Activated T-helper 1 cell treated with anti-CD3 and anti-CD28 coated beads, Interleukin-12 subunit alpha, Interleukin-12 subunit beta, Interleukin-2, Interleukin-4 antibody, amounts not matched to agents 30 ng/mL and 10 ng/mL and 1 ng/mL, durations not matched to agents 14 hours and 24 hours and 36 hours (primary cell): ENCODE measurements at regions of chr17 and their contacts with region 1.

Region 1: DNA sequence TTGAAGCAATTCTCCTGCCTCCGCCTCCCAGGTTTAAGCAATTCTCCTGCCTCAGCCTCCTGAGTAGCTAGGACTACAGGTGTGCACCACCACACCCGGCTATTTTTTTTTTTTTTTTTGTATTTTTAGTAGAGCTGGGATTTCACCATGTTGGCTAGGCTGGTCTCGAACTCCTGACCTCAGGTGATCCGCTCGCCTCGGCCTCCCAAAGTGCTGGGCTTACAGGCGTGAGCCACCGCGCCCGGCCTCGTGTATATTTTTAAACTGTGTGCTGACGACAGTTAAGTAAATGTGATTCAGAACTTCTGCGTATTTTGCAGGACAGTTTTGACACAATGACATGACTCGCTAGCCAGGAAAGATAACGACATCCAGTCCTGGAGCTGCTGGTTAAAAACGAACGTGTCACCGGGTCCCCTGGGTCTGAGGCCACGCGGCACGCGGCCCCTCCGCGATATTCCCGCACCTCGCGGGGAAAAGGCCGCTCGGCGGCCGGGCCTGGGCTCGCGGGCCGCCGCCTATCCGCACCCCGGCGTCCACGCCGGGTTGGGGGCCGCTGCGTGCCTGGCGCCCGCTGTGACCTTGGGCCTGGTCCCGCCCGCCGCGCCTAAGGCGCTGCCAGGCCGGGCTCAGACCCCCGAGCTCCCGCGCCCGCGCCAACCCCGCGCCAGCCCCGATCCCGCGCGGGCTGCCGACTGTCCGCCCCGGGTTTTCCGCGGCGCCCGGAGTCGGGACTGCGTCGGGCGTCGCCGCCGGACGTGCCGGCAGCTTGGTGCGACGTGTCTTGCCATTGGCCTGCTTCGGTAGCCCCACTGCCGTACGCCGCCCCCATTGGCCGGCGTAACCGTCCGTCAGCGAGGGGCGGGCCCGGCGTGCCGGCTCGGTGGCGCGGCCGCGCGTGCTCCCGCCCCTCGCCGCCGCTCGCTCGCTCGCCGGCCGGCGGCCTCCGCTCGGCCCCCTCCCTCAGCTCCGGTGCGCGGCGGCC is at the start of gene FOXK2:
- DNase-seq: peak; percentile 96
- H3K4me3 Mint-ChIP-seq: peak within 1 kb of the TSS; percentile 90
- H3K27ac Mint-ChIP-seq: peak within 1 kb of the TSS; percentile 92
- H3K4me1 Mint-ChIP-seq: peaks cover 14% of the 10 kb centered on the region
- H3K27me3 Mint-ChIP-seq: no peaks in the 10 kb centered on the region
- total RNA-seq, gene FOXK2: 97.7 and 98.1 TPM in 2 replicates

Region 2: DNA sequence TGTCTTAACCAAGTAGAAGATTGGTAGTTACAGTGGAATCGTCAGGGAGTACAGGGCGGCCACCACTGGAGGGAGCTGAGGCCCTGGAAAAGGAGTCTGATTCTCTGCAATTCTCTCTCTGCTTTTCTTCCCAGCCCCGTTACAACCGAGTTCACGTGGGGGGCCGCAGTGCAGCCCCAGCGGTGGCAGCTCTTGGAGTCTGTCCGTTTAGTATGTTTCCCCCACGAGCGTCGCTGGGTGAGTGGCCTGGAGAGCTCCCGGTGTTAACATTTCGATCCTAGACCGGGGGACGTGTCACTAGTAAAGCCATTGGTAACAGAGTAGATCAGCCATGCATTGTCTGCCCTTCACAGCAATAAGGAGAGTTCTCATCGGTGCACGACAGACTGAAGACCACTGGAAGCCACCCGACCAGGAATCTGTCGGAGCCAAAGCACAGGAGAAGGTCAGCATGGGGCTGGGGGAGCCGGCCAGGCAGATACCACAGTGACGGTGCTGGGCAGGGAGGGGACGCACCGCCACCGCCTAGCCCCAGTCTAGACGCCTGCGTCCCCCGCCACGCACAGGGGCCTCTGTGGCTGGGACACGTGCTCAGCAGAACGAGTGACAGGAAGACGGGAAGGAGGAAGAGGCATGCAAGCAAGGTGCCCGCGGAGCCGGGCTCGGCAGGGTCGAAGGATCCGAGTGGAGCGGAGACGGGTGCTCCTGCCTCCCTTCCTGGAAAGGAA is 274.5 kb before region 1 on chr17:
- intact Hi-C with region 1: no loop called
- DNase-seq: no peak
- H3K4me3 Mint-ChIP-seq: no peak overlapping the region
- H3K27ac Mint-ChIP-seq: peak overlapping the region; percentile 87
- H3K4me1 Mint-ChIP-seq: peaks cover 22% of the 10 kb centered on the region
- H3K27me3 Mint-ChIP-seq: no peaks in the 10 kb centered on the region

Region 3: GRCh38 chr17:82494236-82495055 is 24.7 kb before region 1 on chr17:
- intact Hi-C with region 1: loop called (anchors 1 kb)
- DNase-seq: peak; percentile 81
- H3K4me3 Mint-ChIP-seq: peak overlapping the region; percentile 12
- H3K27ac Mint-ChIP-seq: peak overlapping the region; percentile 87
- H3K4me1 Mint-ChIP-seq: peaks cover 29% of the 10 kb centered on the region
- H3K27me3 Mint-ChIP-seq: peaks cover 2% of the 10 kb centered on the region

Region 4: DNA sequence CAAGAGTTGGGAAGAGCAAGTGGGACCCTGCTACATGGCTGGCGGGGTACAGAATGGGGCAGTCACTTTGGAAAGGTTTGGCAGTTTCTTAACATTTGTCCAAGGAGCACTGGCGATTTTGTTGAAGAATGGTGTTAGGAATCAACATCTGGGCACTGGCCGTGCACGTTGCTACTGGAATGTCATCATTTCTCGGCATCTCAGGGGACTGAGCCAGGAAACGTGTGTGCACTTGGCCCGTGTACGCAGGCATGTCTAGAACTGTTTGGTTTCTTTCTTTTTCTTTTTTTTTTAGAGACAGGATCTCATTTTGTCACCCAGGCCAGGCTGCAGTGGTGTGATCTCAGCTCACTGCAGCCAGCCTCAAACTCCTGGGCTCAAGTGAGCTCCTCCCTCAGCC is 16.9 kb before region 1 on chr17:
- intact Hi-C with region 1: loop called (anchors 1 kb)
- DNase-seq: no peak
- H3K4me3 Mint-ChIP-seq: no peak overlapping the region
- H3K27ac Mint-ChIP-seq: no peak overlapping the region
- H3K4me1 Mint-ChIP-seq: peaks cover 14% of the 10 kb centered on the region
- H3K27me3 Mint-ChIP-seq: peaks cover 5% of the 10 kb centered on the region